Caco-2 (cell line): ENCODE measurements at regions of chr22 and their contacts with region 1.

Region 1: GRCh38 chr22:39117585-39118191 is 20.6 kb downstream of the APOBEC3H start:
- DNase-seq: peak; percentile 69 to 77
- H3K4me3 ChIP-seq: no peak overlapping the region
- H3K4me3 Mint-ChIP-seq: no peak overlapping the region
- H3K27ac Mint-ChIP-seq: peak overlapping the region; percentile 39
- H3K4me1 ChIP-seq: peaks cover 22% of the 10 kb centered on the region
- H3K4me1 Mint-ChIP-seq: peaks cover 25% of the 10 kb centered on the region
- H3K27me3 ChIP-seq: no peaks in the 10 kb centered on the region
- H3K27me3 Mint-ChIP-seq: no peaks in the 10 kb centered on the region
- CTCF ChIP-seq: peak; percentile 37 to 47

Region 2: DNA sequence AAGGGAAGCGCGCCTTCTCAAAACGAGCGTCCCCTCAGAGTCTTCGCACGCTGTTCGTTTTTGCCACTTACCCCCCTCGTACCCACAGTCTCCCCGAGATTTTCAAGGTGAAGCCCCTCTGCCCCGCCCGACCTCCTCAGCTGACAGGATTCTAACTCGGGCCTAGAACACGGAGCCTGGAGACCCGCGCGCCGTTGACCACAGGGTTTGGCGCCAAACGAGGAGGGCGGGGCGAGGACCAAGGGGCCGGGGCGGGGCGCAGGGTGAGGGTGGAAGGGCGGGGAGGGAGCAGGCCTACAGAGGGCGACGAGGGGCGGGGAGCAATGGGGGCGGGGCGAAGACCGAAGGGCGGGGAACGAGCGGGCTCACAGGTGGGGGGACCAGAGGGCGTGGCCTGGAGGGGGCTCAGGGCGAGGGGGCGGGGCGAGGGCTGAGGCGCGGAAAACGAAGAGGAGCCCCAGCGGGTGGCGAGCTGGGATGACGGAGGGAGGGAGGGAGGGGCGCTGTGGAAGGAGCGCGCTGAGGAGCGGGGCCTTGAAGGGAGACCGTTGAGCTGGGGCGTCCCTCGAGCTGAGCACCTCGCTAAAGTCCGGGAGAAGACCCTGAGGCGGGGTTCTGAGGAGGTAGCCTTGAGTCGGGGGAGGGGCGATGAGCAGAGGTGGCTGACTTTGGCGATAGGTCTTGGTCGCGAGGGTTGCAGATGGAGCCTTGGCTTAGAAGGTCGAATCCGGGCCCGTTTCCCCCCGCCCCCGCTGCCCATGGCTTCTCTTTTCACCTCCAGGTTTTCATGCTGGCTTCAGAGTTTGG is 547.5 kb before region 1 on chr22 and contains the start of gene DMC1:
- CTCF ChIA-PET with region 1: no interaction called
- POLR2A ChIA-PET with region 1: no interaction called
- intact Hi-C with region 1: no loop called
- DNase-seq: peak; percentile 92 to 96
- H3K4me3 ChIP-seq: peak within 1 kb of the TSS; percentile 92
- H3K4me3 Mint-ChIP-seq: peak within 1 kb of the TSS; percentile 87
- H3K27ac Mint-ChIP-seq: peak within 1 kb of the TSS; percentile 82
- H3K4me1 ChIP-seq: peaks cover 5% of the 10 kb centered on the region; the same call in 1 of the 2 replicates
- H3K4me1 Mint-ChIP-seq: peaks cover 11% of the 10 kb centered on the region
- H3K27me3 ChIP-seq: no peaks in the 10 kb centered on the region
- H3K27me3 Mint-ChIP-seq: no peaks in the 10 kb centered on the region
- CTCF ChIP-seq: no peak
- total RNA-seq, gene DMC1: 1.1 and 1.2 TPM in 2 replicates

Region 3: GRCh38 chr22:39013942-39014722 is 103.6 kb before region 1 on chr22 and contains the start of gene APOBEC3C:
- CTCF ChIA-PET with region 1: no interaction called
- POLR2A ChIA-PET with region 1: no interaction called
- intact Hi-C with region 1: loop called (anchors 1 kb)
- DNase-seq: peak; percentile 81 to 87
- H3K4me3 ChIP-seq: peak within 1 kb of the TSS; percentile 41
- H3K4me3 Mint-ChIP-seq: peak within 1 kb of the TSS; percentile 81
- H3K27ac Mint-ChIP-seq: peak within 1 kb of the TSS; percentile 85
- H3K4me1 ChIP-seq: peaks cover 21% of the 10 kb centered on the region
- H3K4me1 Mint-ChIP-seq: peaks cover 30% of the 10 kb centered on the region
- H3K27me3 ChIP-seq: no peaks in the 10 kb centered on the region
- H3K27me3 Mint-ChIP-seq: no peaks in the 10 kb centered on the region
- CTCF ChIP-seq: no peak
- total RNA-seq, gene APOBEC3C: 24.2 and 25.1 TPM in 2 replicates

Region 4: GRCh38 chr22:40247976-40248375 is 1130.3 kb after region 1 on chr22:
- CTCF ChIA-PET with region 1: no interaction called
- POLR2A ChIA-PET with region 1: no interaction called
- intact Hi-C with region 1: no loop called
- DNase-seq: no peak
- H3K4me3 ChIP-seq: no peak overlapping the region
- H3K4me3 Mint-ChIP-seq: no peak overlapping the region
- H3K27ac Mint-ChIP-seq: no peak overlapping the region
- H3K4me1 ChIP-seq: no peaks in the 10 kb centered on the region
- H3K4me1 Mint-ChIP-seq: no peaks in the 10 kb centered on the region
- H3K27me3 ChIP-seq: no peaks in the 10 kb centered on the region
- H3K27me3 Mint-ChIP-seq: no peaks in the 10 kb centered on the region
- CTCF ChIP-seq: no peak